ENCODE measurements at regions of chr18 and their contacts with region 1.

Region 1: GRCh38 chr18:3447895-3448837 is 1.8 kb upstream of the TGIF1 start:
- DNase-seq: no peak
- ATAC-seq: peak; percentile 80
- H3K4me3 ChIP-seq: peak overlapping the region; percentile 94 to 97
- H3K27ac ChIP-seq: peak overlapping the region; percentile 98
- H3K4me1 ChIP-seq: peaks cover 33% of the 10 kb centered on the region
- H3K27me3 ChIP-seq: no peaks in the 10 kb centered on the region
- CTCF ChIP-seq: peak; percentile 25; the same call in 1 of the 2 replicates

Region 2: DNA sequence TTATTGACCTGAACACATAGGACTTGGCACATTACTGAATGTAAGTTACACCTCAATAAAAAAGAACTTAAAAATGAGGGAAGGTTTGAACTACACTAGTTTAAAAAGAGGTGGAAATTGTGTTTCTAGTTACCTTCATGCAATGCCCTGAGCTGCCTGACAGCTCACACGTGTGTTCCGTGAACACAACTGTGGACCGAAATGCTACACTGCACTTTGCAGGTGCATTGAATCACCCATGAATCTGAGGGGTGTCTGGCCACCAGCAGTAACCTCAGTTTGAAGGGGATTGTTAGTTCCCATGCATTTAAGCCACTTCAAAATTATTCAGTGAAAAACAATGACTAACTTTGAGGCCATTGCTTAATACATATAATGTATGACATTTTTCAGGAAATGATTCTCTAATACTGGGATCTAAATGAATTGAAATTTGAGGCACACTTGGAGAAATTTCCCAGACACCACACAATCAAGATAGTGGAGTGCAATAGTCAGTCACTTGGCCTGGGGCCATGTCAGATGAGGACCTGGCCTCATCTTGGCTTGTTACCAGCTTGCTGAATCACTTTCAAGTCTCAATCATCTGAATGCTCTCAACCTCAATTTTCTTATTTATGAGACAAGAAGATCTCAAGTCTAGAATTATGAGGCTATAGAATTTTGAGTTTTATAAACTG is 126.9 kb before region 1 on chr18:
- CTCF ChIA-PET with region 1: no interaction called
- POLR2A ChIA-PET with region 1: interaction called, 18 read pairs
- in situ Hi-C with region 1: no loop called
- intact Hi-C with region 1: loop called (anchors 10 kb)
- DNase-seq: peak; percentile 45
- ATAC-seq: no peak
- H3K4me3 ChIP-seq: no peak overlapping the region
- H3K27ac ChIP-seq: peak overlapping the region; percentile 81
- H3K4me1 ChIP-seq: peaks cover 47% of the 10 kb centered on the region
- H3K27me3 ChIP-seq: no peaks in the 10 kb centered on the region
- CTCF ChIP-seq: no peak

Region 3: DNA sequence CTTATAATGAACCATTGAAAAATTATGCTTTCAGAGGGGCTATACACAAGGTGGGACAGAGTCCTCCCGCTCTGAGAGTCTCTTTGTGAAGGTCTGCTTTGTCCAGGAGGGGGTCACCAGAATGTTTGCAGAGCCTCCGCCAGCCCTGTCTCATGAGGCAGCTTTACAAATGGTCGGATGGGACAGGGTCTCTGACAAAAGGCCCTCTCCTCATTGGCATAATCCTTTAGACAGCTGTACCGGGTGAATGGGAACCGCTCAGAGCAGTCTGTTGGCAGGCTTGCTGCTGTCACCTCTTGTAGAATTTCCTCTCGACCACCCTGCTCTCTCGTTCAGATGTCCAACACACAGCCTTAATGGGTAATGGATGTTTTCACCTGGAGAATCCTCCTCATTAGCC is 38.4 kb before region 1 on chr18:
- CTCF ChIA-PET with region 1: interaction called, 4 read pairs
- POLR2A ChIA-PET with region 1: interaction called, 28 read pairs
- in situ Hi-C with region 1: no loop called
- intact Hi-C with region 1: no loop called
- DNase-seq: no peak
- ATAC-seq: peak; percentile 30
- H3K4me3 ChIP-seq: no peak overlapping the region
- H3K27ac ChIP-seq: peak overlapping the region; percentile 93
- H3K4me1 ChIP-seq: peaks cover 36% of the 10 kb centered on the region
- H3K27me3 ChIP-seq: no peaks in the 10 kb centered on the region
- CTCF ChIP-seq: no peak

Region 4: DNA sequence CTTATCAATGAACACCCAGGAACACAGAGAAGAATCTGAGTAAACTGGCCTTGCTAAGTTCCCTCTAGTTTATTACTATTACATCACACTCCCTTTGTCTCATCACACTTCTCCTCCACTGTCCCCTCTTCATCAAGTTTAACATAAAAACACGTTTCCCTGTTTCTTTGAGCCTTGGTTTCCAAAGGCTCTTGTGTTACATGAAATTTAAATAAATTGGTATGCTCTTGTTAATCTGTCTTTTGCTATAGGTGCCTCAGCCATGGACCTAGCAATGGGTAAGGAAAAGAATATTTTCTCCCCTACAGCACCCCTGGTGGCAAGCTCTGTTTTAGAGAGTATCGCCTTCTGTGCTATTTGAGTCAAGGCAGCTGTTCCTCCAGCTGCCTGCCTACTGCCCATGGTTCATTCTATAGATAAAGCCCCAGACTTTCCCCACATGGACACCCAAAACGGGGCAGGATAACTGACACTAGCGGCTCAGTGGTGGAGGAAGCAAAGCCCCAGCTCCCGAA is 33.6 kb after region 1 on chr18:
- CTCF ChIA-PET with region 1: no interaction called
- POLR2A ChIA-PET with region 1: no interaction called
- in situ Hi-C with region 1: no loop called
- intact Hi-C with region 1: no loop called
- DNase-seq: no peak
- ATAC-seq: peak; percentile 87
- H3K4me3 ChIP-seq: no peak overlapping the region
- H3K27ac ChIP-seq: peak overlapping the region; percentile 75
- H3K4me1 ChIP-seq: peaks cover 15% of the 10 kb centered on the region
- H3K27me3 ChIP-seq: no peaks in the 10 kb centered on the region
- CTCF ChIP-seq: peak; percentile 78

Measured in Panc1 (cell line).